ENCODE measurements at regions of chr12 and their contacts with region 1.

Region 1: GRCh38 chr12:6944381-6945186 is 762 bp downstream of the C12orf57 start:
- DNase-seq: peak; percentile 97
- H3K4me3 ChIP-seq: peak overlapping the region; percentile 82
- H3K27ac ChIP-seq: peak overlapping the region; percentile 92
- H3K4me1 ChIP-seq: peaks cover 17% of the 10 kb centered on the region
- H3K27me3 ChIP-seq: no peaks in the 10 kb centered on the region

Region 2: GRCh38 chr12:6764011-6764828 is 180.4 kb before region 1 on chr12:
- in situ Hi-C with region 1: no loop called
- DNase-seq: peak; percentile 96
- H3K4me3 ChIP-seq: peak overlapping the region; percentile 98
- H3K27ac ChIP-seq: peak overlapping the region; percentile 73
- H3K4me1 ChIP-seq: peaks cover 37% of the 10 kb centered on the region
- H3K27me3 ChIP-seq: no peaks in the 10 kb centered on the region

Region 3: DNA sequence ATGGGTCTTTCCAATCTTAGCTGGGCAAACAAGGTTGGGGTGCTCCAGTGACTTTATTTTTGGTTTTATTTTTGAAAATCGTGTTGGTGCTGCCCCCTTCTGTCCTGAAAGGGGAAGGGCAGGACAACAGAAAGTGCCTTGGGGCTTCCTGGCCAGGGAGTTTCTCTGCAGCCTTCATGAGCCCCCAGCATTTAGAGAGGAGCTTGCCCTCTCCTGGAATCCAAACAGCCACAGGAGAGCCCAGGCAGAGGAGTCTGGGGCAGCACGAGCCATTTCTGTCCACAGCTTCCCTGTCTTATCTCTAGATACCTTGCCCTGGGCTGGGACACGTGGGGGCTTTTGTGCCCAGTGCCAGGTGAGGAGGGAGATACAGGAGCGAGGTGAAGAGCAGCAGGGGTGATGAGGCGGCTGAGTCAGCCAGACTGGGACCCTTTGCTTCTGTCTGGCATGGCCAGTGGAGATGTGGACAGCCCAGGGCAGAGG is 168.8 kb after region 1 on chr12:
- in situ Hi-C with region 1: loop called (anchors 10 kb)
- DNase-seq: peak; percentile 57
- H3K4me3 ChIP-seq: no peak overlapping the region
- H3K27ac ChIP-seq: no peak overlapping the region
- H3K4me1 ChIP-seq: peaks cover 4% of the 10 kb centered on the region
- H3K27me3 ChIP-seq: no peaks in the 10 kb centered on the region

Region 4: DNA sequence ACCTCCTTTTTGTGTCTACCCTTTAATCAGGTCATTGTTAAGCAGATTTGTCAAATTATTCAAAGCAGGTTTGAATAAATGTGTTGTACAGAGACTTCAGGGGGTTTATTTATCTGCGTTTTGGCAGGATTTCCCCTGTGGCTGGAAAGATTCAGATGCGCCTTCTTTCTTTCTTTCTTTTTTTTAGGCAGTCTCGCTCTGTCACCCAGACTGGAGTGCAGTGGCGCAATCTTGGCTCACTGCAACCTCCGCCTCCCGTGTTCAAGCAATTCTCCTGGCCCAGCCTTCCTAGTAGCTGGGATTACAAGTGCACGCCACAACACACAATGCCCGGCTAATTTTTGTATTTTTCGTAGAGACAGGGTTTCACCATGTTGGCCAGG is 814.2 kb after region 1 on chr12:
- in situ Hi-C with region 1: no loop called
- DNase-seq: peak; percentile 1
- H3K4me3 ChIP-seq: no peak overlapping the region
- H3K27ac ChIP-seq: no peak overlapping the region
- H3K4me1 ChIP-seq: no peaks in the 10 kb centered on the region
- H3K27me3 ChIP-seq: peaks cover 15% of the 10 kb centered on the region; the same call in 1 of the 2 replicates